ENCODE measurements at regions of chr15 and their contacts with region 1.

Region 1: DNA sequence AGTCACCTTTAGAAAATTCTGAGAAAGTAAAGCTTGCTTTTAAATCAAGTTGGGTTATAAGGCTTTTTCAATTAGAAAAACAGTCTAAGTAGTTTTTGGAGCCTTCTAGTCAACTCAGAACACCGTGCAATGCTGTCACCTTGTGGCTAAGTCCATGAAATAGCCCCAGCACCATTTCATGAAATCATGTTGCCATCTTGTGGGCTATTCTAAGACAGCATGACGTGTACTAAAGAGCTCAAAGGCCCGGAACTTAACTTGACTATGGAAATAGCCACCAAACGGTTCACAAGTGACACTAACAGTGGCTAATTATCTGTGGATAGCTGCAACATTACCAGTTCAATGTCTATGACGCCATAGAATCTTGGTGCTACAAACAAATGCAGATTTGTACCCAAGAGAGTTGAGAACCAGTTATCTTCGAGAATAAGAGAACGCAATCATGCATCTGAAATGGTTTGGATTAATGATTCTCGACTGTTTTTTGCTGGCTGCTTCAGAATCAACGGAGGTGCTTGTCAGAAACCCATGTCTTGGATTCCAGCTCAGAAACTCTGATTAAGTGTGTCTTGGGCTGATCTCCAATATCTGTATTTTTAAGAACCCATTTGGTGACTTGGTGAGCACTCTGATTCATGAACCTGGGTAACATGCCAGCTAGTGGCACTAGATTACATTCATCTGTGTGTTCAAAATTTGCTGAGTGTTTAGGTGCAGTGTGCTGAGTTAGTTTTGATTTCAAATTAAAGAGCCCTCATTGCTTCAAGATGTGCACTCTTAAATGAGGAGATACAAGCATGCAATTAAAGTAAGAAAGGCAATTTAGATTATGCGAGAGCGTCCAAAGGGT is 111.2 kb upstream of the MCTP2 start:
- DNase-seq: peak; percentile 34 to 84 (median 63)
- H3K4me3 ChIP-seq: no peak overlapping the region
- H3K27ac ChIP-seq: peak overlapping the region in 1 of 5 donors; percentile 45
- H3K4me1 ChIP-seq: no peaks in the 10 kb centered on the region
- H3K27me3 ChIP-seq: no peaks in the 10 kb centered on the region
- CTCF ChIP-seq: peak; percentile 58 to 94 (median 89)
- POLR2A ChIP-seq: no peak

Region 2: GRCh38 chr15:93030430-93031105 is 1089.6 kb before region 1 on chr15:
- intact Hi-C with region 1: loop called (anchors 5 to 10 kb)
- DNase-seq: peak; percentile 68 to 90 (median 79)
- H3K4me3 ChIP-seq: no peak overlapping the region
- H3K27ac ChIP-seq: peak overlapping the region in 3 of 5 donors; percentile 74 to 96 (median 85)
- H3K4me1 ChIP-seq: peaks cover 24 to 40% of the 10 kb centered on the region in 2 donors
- H3K27me3 ChIP-seq: no peaks in the 10 kb centered on the region
- CTCF ChIP-seq: peak; percentile 69 to 90 (median 83)
- POLR2A ChIP-seq: no peak

Region 3: GRCh38 chr15:93987111-93987467 is 133.1 kb before region 1 on chr15:
- intact Hi-C with region 1: loop called (anchors 10 kb)
- DNase-seq: no peak
- H3K4me3 ChIP-seq: no peak overlapping the region
- H3K27ac ChIP-seq: no peak overlapping the region
- H3K4me1 ChIP-seq: no peaks in the 10 kb centered on the region
- H3K27me3 ChIP-seq: no peaks in the 10 kb centered on the region
- CTCF ChIP-seq: no peak
- POLR2A ChIP-seq: no peak

Region 4: DNA sequence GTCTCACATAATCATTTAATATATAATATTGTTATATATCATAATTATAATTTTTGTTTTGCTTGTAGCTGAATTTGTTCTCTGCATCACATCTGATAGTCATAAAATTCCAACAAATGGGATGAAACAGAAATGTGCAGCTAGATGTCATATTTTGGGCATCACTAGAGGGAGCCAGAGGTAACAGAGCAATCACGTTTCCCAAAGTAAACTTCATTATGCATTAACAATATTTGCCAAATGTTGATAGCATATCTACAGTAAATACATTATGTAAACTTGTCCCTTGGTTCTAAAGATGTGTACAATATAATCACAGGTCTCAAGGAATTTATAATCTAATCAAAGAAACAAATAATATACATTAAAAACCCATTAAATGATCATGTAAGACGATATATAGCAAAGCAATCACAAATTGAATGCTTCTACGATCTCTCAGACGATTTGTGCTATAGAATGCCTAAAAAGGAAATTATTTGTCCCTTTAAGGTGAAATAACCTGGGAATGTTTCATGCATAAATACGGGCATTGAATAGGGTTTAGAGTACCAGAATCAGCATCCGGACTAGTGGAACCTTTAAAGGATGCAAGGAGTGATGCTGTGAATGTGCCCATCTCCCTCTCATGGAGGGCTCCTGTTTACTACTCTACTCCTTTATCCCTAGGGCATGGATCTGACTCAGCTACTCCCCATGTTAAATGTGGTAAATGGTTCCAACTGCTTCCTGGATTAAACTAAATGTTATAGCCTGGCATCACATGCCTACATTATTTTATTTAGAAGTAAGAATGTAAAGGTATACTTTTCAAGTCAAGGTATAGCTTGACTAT is 122.8 kb before region 1 on chr15:
- intact Hi-C with region 1: loop called in 1 of 2 experiments (anchors 10 kb)
- DNase-seq: no peak
- H3K4me3 ChIP-seq: no peak overlapping the region
- H3K27ac ChIP-seq: no peak overlapping the region
- H3K4me1 ChIP-seq: no peaks in the 10 kb centered on the region
- H3K27me3 ChIP-seq: no peaks in the 10 kb centered on the region
- CTCF ChIP-seq: peak; percentile 25 to 69 (median 53)
- POLR2A ChIP-seq: no peak